ENCODE measurements at regions of chr1 and their contacts with region 1.

Region 1: GRCh38 chr1:220294846-220295301 is 22.6 kb upstream of the RAB3GAP2 start:
- DNase-seq: no peak
- ATAC-seq: no peak

Region 2: DNA sequence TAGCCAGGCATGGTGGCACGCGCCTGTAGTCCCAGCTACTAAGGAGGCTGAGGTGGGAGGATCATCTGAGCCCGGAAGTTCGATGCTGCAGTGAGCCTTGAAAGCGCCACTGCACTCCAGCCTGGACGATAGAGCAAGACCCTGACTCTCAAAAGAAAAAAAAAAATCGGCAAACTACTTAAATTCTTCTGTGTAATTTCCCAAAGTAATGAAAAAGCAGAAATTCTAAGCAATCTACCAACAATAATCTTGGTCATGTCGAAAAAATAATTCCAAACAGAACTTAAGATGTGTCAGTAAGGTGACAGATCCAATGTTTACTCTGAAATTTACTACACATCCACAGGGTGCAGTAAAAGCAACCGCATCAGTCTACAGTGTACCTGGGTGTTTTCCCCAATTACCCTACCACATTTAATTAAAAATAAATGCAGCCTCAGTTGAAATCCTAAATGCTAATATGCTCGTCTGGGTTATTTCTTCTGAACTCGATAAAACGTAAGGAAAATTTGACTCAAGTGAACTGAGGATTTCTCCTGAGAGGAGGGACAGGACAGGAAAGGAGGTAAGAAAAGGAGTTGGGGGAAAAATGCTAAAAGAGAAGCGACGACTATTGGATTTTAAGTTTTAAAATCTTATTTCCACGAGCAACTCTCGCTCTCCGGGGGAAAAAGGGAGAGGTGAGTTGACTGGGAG is 249.4 kb before region 1 on chr1:
- intact Hi-C with region 1: no loop called
- DNase-seq: no peak
- ATAC-seq: no peak

Region 3: GRCh38 chr1:220498188-220498587 is 203.3 kb after region 1 on chr1:
- intact Hi-C with region 1: no loop called
- DNase-seq: no peak
- ATAC-seq: no peak

Region 4: DNA sequence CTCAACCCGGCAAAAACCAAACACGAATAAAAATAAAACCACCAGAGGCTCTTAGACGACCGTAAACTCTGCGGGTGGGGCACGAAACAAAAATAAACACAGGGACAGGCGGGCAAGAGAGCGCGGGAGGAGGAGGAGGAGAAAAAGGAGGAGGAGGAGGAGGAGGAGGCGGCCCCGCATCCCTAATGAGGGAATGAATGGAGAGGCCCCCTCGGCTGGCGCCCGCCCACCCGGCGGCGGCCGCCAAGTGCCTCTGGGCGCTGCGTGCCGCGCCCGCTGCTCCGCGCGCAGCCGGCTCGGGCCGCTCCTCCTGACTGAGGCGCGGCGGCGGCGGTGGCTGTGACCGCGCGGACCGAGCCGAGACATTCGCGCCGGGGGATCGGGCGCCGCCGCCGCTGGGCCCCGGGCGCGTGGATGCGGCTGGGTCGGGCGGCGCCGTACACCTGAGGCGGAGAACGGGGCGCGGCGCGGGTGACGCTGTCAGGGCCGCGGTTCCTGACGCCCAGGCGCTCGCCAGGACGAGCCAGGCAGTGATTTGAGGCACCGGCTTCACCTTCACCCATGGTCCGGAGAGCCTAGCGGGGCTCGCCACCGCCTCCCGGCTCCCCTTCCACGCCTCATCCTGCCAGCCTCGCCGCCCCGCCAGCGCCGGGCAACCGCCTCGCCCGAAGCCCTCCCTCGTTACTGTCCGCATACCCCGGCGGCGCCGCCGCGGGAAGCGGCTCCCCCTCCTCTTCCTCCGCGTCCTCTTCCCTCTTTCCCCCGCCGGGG is 233.2 kb after region 1 on chr1 and contains the start of gene MARK1:
- intact Hi-C with region 1: loop called (anchors 10 kb)
- DNase-seq: peak; percentile 89
- ATAC-seq: peak; percentile 91
- total RNA-seq, gene MARK1: 13.7 TPM

Region 5: DNA sequence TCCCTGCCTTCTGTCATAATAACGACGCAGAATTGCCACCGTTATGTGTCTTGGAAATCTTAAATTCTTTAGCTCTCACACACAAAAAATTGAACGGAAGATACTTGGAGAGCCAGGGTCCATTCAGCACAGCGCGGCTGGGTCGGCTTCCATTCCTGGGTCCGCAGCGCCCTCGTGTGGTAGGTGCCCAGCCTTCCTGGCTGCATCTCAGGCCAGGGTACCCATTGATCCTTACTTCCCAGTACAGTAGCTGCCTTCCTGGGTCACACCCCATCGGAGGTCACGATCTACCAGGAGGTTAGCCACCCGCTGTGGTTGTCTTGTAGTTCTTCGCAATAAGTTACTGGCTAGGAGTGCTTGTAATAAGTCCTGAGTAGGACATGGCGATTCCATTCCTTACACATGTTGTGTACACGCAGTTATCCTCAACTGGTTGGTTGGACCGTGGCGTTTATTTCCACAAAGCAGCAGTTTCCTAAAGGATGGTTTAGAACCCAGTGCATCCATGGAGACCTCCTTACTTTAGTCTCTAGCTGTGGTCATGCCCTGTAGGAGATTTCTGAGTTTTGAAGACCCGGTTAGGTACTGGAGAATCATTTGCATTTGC is 481.9 kb after region 1 on chr1:
- intact Hi-C with region 1: loop called (anchors 5 kb)
- DNase-seq: peak; percentile 91
- ATAC-seq: peak; percentile 98

Measured in Right ventricle myocardium superior (tissue), 1 donor.